Ascending aorta (tissue), 2 donors: ENCODE measurements at regions of chr12 and their contacts with region 1.

Region 1: GRCh38 chr12:57583008-57583831 is 7.8 kb upstream of the PIP4K2C start:
- DNase-seq: peak in 1 of 2 donors; percentile 86
- H3K4me3 ChIP-seq: no peak overlapping the region
- H3K27ac ChIP-seq: no peak overlapping the region
- H3K4me1 ChIP-seq: no peaks in the 10 kb centered on the region
- H3K27me3 ChIP-seq: no peaks in the 10 kb centered on the region
- CTCF ChIP-seq: peak; percentile 91 to 93 (median 92)

Region 2: GRCh38 chr12:57498132-57498502 is 85.1 kb before region 1 on chr12:
- intact Hi-C with region 1: no loop called
- DNase-seq: no peak
- H3K4me3 ChIP-seq: no peak overlapping the region
- H3K27ac ChIP-seq: no peak overlapping the region
- H3K4me1 ChIP-seq: no peaks in the 10 kb centered on the region
- H3K27me3 ChIP-seq: no peaks in the 10 kb centered on the region
- CTCF ChIP-seq: no peak

Region 3: GRCh38 chr12:57524777-57525614 is 58.2 kb before region 1 on chr12:
- intact Hi-C with region 1: no loop called
- DNase-seq: no peak
- H3K4me3 ChIP-seq: peak overlapping the region in 1 of 2 donors; percentile 81
- H3K27ac ChIP-seq: peak overlapping the region; percentile 97 to 99
- H3K4me1 ChIP-seq: peaks cover 16 to 31% of the 10 kb centered on the region in 2 donors
- H3K27me3 ChIP-seq: no peaks in the 10 kb centered on the region
- CTCF ChIP-seq: no peak

Region 4: GRCh38 chr12:57621497-57622292 is 38.5 kb after region 1 on chr12:
- intact Hi-C with region 1: loop called (anchors 1 kb)
- DNase-seq: peak in 1 of 2 donors; percentile 77
- H3K4me3 ChIP-seq: peak overlapping the region; percentile 15 to 60
- H3K27ac ChIP-seq: no peak overlapping the region
- H3K4me1 ChIP-seq: peaks cover 5 to 8% of the 10 kb centered on the region in 2 donors
- H3K27me3 ChIP-seq: no peaks in the 10 kb centered on the region
- CTCF ChIP-seq: peak; percentile 95 to 97 (median 96)